ENCODE measurements at regions of chr18 and their contacts with region 1.

Region 1: GRCh38 chr18:69898241-69898861 is 49.3 kb downstream of the CD226 start:
- DNase-seq: peak in 6 of 14 experiments; percentile 11 to 63 (median 46)
- ATAC-seq: peak; percentile 53
- H3K4me3 ChIP-seq: peak overlapping the region; percentile 42
- H3K4me3 Mint-ChIP-seq: peak overlapping the region; percentile 83
- H3K27ac ChIP-seq: peak overlapping the region; percentile 34 to 70
- H3K27ac Mint-ChIP-seq: peak overlapping the region; percentile 86
- H3K4me1 ChIP-seq: peaks cover 36% of the 10 kb centered on the region
- H3K4me1 Mint-ChIP-seq: peaks cover 82% of the 10 kb centered on the region
- H3K27me3 ChIP-seq: no peaks in the 10 kb centered on the region
- H3K27me3 Mint-ChIP-seq: no peaks in the 10 kb centered on the region
- CTCF ChIP-seq: no peak

Region 2: DNA sequence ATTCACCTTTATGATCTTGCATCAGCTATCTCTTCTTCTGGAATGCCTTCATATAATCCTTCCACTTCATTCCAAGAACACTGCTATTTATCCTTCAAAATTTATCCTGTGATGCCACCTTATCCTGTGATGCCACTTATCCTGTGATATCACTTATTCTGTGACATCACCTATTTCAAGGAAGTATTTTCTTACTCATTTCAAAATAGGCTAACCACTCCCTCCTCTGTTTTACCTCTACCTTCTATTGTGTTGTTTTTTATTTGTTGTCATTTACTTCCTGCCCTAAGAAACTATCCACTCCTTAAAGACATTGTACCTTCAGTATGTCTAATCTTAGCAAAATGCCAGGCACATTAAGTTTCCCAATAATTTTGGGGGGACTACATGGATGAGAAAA is 10.5 kb after region 1 on chr18:
- CTCF ChIA-PET with region 1: interaction called, 3 read pairs
- POLR2A ChIA-PET with region 1: interaction called, 16 read pairs
- intact Hi-C with region 1: no loop called
- DNase-seq: no peak
- ATAC-seq: no peak
- H3K4me3 ChIP-seq: no peak overlapping the region
- H3K4me3 Mint-ChIP-seq: no peak overlapping the region
- H3K27ac ChIP-seq: no peak overlapping the region
- H3K27ac Mint-ChIP-seq: peak overlapping the region; percentile 69
- H3K4me1 ChIP-seq: peaks cover 20% of the 10 kb centered on the region
- H3K4me1 Mint-ChIP-seq: peaks cover 73% of the 10 kb centered on the region
- H3K27me3 ChIP-seq: no peaks in the 10 kb centered on the region
- H3K27me3 Mint-ChIP-seq: no peaks in the 10 kb centered on the region
- CTCF ChIP-seq: no peak

Region 3: DNA sequence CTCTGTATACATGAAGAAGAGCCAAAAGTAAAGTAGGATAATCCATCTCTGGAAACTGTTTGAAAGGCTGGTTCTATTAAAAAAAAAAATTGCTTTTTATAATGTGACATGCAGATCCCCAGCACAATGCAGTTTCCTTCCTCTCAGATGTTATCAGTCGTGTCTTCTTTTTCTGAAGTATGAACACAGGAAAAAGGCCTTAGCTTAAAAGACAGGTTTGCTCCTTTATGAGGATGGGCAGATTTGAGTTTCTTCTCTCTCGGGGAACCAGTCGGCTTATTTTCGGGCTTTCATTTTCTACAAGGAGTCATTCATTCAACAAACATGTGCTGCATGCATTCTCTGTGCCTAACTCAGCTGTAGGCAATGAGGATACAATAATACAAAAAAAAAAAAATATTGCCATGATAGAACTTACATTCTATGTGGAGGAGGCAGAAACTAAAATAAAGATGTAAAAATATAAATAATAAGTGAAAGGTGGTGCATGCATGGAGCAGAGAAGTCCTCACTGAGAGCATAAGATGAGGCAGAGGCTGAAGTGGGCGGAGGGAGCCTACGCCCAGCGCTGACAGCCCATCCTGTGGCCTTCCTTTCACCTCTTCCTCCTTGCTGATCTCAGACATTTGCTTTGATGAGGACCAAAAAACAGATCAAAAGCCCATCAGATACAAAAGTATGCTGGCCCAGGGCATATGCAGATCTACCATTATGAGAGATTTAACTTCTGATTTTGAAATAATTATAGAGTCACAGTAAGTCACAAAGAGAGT is 49.2 kb after region 1 on chr18 and contains the start of gene CD226:
- CTCF ChIA-PET with region 1: interaction called, 3 read pairs
- POLR2A ChIA-PET with region 1: interaction called, 11 read pairs
- intact Hi-C with region 1: loop called in 1 of 2 experiments (anchors 5 kb)
- DNase-seq: peak in 6 of 14 experiments; percentile 17 to 78 (median 54)
- ATAC-seq: peak; percentile 75
- H3K4me3 ChIP-seq: peak within 1 kb of the TSS; percentile 57
- H3K4me3 Mint-ChIP-seq: no peak within 1 kb of the TSS
- H3K27ac ChIP-seq: peak within 1 kb of the TSS; percentile 58 to 70
- H3K27ac Mint-ChIP-seq: no peak within 1 kb of the TSS
- H3K4me1 ChIP-seq: peaks cover 66% of the 10 kb centered on the region
- H3K4me1 Mint-ChIP-seq: peaks cover 15% of the 10 kb centered on the region
- H3K27me3 ChIP-seq: no peaks in the 10 kb centered on the region
- H3K27me3 Mint-ChIP-seq: no peaks in the 10 kb centered on the region
- CTCF ChIP-seq: no peak
- total RNA-seq, gene CD226: 74.0 to 74.8 TPM

Region 4: DNA sequence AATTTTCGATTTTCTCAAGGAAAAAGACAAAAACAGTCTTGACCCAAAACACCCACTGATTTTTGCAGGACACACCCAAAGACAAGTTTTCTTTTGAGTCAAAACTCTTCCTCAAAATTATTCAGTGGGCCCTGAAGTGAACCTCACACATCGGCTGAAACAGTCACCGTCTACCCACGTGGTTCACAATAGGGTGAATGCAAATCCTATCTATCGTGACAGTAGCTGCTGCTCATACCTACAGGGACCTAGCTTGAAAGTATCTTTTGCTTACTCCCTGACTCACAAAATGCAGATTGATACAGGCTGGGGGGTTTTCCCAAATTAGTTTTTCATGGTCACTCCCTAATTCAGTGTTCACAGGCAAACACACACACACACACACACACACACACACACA is 60.1 kb after region 1 on chr18:
- CTCF ChIA-PET with region 1: interaction called, 3 read pairs
- POLR2A ChIA-PET with region 1: interaction called, 31 read pairs
- intact Hi-C with region 1: loop called (anchors 1 to 2 kb)
- DNase-seq: peak in 3 of 14 experiments; percentile 28 to 71 (median 66)
- ATAC-seq: no peak
- H3K4me3 ChIP-seq: no peak overlapping the region
- H3K4me3 Mint-ChIP-seq: no peak overlapping the region
- H3K27ac ChIP-seq: peak overlapping the region; percentile 25 to 75
- H3K27ac Mint-ChIP-seq: no peak overlapping the region
- H3K4me1 ChIP-seq: peaks cover 45% of the 10 kb centered on the region
- H3K4me1 Mint-ChIP-seq: peaks cover 16% of the 10 kb centered on the region
- H3K27me3 ChIP-seq: no peaks in the 10 kb centered on the region
- H3K27me3 Mint-ChIP-seq: no peaks in the 10 kb centered on the region
- CTCF ChIP-seq: no peak